ENCODE measurements at regions of chr22 and their contacts with region 1.

Region 1: GRCh38 chr22:33018232-33018864 is 39.8 kb downstream of the SYN3 start:
- DNase-seq: peak; percentile 87
- ATAC-seq: peak; percentile 97
- H3K4me3 Mint-ChIP-seq: no peak overlapping the region
- H3K27ac Mint-ChIP-seq: no peak overlapping the region
- H3K4me1 Mint-ChIP-seq: peaks cover 13% of the 10 kb centered on the region
- H3K27me3 Mint-ChIP-seq: no peaks in the 10 kb centered on the region
- CTCF ChIP-seq: peak; percentile 83

Region 2: DNA sequence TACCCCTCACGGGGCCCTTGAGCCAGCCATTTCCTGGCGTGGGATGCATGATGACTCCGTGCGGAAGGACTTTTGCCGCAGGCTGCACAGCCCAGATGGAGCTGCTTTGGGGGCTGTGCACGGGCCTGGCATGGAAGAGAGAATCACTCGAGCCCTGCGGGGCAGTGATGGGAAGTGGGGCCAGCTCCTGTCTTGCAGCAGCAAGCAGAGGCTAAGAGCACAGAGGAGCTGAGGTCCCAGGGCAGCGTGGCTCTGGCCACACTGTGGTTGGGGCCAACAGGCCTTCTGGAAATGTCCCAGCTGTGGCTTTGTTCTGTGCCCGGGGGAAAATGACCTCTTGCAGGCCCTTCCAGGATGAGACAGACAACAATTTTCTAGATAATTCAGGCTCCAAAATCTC is 309.5 kb before region 1 on chr22:
- CTCF ChIA-PET with region 1: no interaction called
- POLR2A ChIA-PET with region 1: no interaction called
- DNase-seq: no peak
- ATAC-seq: no peak
- H3K4me3 Mint-ChIP-seq: no peak overlapping the region
- H3K27ac Mint-ChIP-seq: no peak overlapping the region
- H3K4me1 Mint-ChIP-seq: no peaks in the 10 kb centered on the region
- H3K27me3 Mint-ChIP-seq: peaks cover 33% of the 10 kb centered on the region
- CTCF ChIP-seq: no peak

Region 3: GRCh38 chr22:32788909-32789624 is 229.3 kb before region 1 on chr22:
- CTCF ChIA-PET with region 1: no interaction called
- POLR2A ChIA-PET with region 1: no interaction called
- DNase-seq: no peak
- ATAC-seq: no peak
- H3K4me3 Mint-ChIP-seq: no peak overlapping the region
- H3K27ac Mint-ChIP-seq: no peak overlapping the region
- H3K4me1 Mint-ChIP-seq: peaks cover 7% of the 10 kb centered on the region
- H3K27me3 Mint-ChIP-seq: no peaks in the 10 kb centered on the region
- CTCF ChIP-seq: no peak

Region 4: DNA sequence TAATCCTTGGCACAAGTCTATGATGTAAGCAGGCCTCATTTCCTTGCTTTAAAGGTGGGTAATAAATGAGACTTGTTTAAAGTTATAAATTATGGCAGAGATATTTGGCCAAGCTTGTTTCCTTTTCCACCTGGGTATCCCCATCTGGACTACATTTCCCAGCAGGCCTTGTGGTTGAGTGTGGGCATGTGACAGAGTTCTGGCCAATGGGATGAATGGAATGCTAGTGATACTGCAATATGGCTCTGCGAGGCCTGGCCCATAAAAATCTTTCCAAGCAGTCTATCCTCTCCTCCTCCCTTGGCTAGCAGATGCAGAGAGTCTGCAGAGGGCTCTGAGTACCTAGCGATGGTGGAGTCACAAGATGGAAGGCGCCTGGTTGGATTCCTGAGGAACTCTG is 114.3 kb before region 1 on chr22:
- CTCF ChIA-PET with region 1: no interaction called
- POLR2A ChIA-PET with region 1: no interaction called
- DNase-seq: peak; percentile 37
- ATAC-seq: peak; percentile 96
- H3K4me3 Mint-ChIP-seq: no peak overlapping the region
- H3K27ac Mint-ChIP-seq: no peak overlapping the region
- H3K4me1 Mint-ChIP-seq: no peaks in the 10 kb centered on the region
- H3K27me3 Mint-ChIP-seq: 0 out of 2 replicates have a peak, but pooled peaks cover 2% of the 10 kb centered on the region
- CTCF ChIP-seq: no peak

Region 5: GRCh38 chr22:33038131-33038772 is 19.9 kb after region 1 on chr22:
- CTCF ChIA-PET with region 1: interaction called, 48 read pairs
- POLR2A ChIA-PET with region 1: no interaction called
- DNase-seq: no peak
- ATAC-seq: peak; percentile 59
- H3K4me3 Mint-ChIP-seq: no peak overlapping the region
- H3K27ac Mint-ChIP-seq: no peak overlapping the region
- H3K4me1 Mint-ChIP-seq: peaks cover 47% of the 10 kb centered on the region
- H3K27me3 Mint-ChIP-seq: peaks cover 31% of the 10 kb centered on the region
- CTCF ChIP-seq: no peak

Region 6: DNA sequence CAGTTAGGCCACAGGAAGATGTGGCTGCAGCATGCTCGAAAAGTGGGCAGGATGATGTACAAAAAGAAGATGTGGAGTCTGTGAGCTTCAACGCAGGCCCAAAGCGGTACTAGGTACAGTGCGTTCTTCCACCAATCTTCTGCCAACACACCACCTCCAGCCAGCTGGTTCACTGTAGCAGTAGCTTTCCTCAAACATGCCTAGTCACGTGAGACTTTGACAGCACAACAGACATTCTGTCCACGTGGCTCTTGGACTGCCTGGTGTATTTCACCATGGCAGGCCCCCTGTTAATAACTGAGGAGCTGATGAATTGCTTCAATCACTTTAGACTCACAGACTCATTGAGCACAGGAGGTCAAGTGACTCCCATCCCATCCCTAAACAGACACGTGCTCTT is 25.8 kb after region 1 on chr22:
- CTCF ChIA-PET with region 1: interaction called, 82 read pairs
- POLR2A ChIA-PET with region 1: interaction called, 3 read pairs
- DNase-seq: no peak
- ATAC-seq: no peak
- H3K4me3 Mint-ChIP-seq: no peak overlapping the region
- H3K27ac Mint-ChIP-seq: no peak overlapping the region
- H3K4me1 Mint-ChIP-seq: peaks cover 46% of the 10 kb centered on the region
- H3K27me3 Mint-ChIP-seq: peaks cover 47% of the 10 kb centered on the region
- CTCF ChIP-seq: no peak

Region 7: GRCh38 chr22:33063611-33064010 is 45.3 kb after region 1 on chr22:
- CTCF ChIA-PET with region 1: interaction called, 57 read pairs
- POLR2A ChIA-PET with region 1: no interaction called
- DNase-seq: no peak
- ATAC-seq: no peak
- H3K4me3 Mint-ChIP-seq: no peak overlapping the region
- H3K27ac Mint-ChIP-seq: no peak overlapping the region
- H3K4me1 Mint-ChIP-seq: peaks cover 43% of the 10 kb centered on the region
- H3K27me3 Mint-ChIP-seq: peaks cover 52% of the 10 kb centered on the region
- CTCF ChIP-seq: no peak

Region 8: GRCh38 chr22:33126881-33127280 is 108.5 kb after region 1 on chr22:
- CTCF ChIA-PET with region 1: interaction called, 46 read pairs
- POLR2A ChIA-PET with region 1: no interaction called
- DNase-seq: no peak
- ATAC-seq: peak; percentile 90
- H3K4me3 Mint-ChIP-seq: no peak overlapping the region
- H3K27ac Mint-ChIP-seq: no peak overlapping the region
- H3K4me1 Mint-ChIP-seq: no peaks in the 10 kb centered on the region
- H3K27me3 Mint-ChIP-seq: peaks cover 18% of the 10 kb centered on the region
- CTCF ChIP-seq: no peak

Region 9: DNA sequence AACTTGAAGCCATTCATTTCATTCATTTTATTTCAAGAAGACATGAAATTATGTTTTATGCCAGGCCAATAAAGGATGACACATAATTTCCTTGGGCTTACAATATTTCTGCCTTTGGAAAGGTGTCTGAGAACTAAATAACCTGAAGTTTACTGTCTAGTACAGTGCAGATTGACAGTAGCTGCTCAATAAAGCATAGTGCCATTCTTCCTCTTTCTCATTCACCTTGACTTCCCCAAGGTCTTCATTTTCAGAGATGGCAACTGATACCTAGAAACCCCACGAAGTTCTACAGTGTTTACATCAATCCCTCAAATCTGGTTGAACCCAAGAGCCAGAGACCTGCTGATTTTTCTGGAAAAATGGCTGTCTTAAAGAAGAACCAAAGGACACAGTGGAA is 184.1 kb after region 1 on chr22:
- CTCF ChIA-PET with region 1: interaction called, 29 read pairs
- POLR2A ChIA-PET with region 1: no interaction called
- DNase-seq: no peak
- ATAC-seq: no peak
- H3K4me3 Mint-ChIP-seq: no peak overlapping the region
- H3K27ac Mint-ChIP-seq: no peak overlapping the region
- H3K4me1 Mint-ChIP-seq: no peaks in the 10 kb centered on the region
- H3K27me3 Mint-ChIP-seq: peaks cover 71% of the 10 kb centered on the region
- CTCF ChIP-seq: no peak